B cell (primary cell): ENCODE measurements at regions of chr2 and their contacts with region 1.

Region 1: GRCh38 chr2:144382849-144383248 is 137.1 kb downstream of the ZEB2 start:
- DNase-seq: peak; percentile 69
- ATAC-seq: peak; percentile 96
- H3K4me3 ChIP-seq: peak overlapping the region in 1 of 5 experiments; percentile 50
- H3K4me3 Mint-ChIP-seq: peak overlapping the region; percentile 79
- H3K27ac ChIP-seq: peak overlapping the region in 1 of 2 donors; percentile 21
- H3K27ac Mint-ChIP-seq: peak overlapping the region; percentile 88
- H3K4me1 ChIP-seq: peaks cover 28 to 29% of the 10 kb centered on the region in 2 donors
- H3K4me1 Mint-ChIP-seq: peaks cover 50% of the 10 kb centered on the region
- H3K27me3 ChIP-seq: peaks cover 0 to 7% (median 0%) of the 10 kb centered on the region in 4 experiments
- H3K27me3 Mint-ChIP-seq: no peaks in the 10 kb centered on the region
- CTCF ChIP-seq: no peak

Region 2: DNA sequence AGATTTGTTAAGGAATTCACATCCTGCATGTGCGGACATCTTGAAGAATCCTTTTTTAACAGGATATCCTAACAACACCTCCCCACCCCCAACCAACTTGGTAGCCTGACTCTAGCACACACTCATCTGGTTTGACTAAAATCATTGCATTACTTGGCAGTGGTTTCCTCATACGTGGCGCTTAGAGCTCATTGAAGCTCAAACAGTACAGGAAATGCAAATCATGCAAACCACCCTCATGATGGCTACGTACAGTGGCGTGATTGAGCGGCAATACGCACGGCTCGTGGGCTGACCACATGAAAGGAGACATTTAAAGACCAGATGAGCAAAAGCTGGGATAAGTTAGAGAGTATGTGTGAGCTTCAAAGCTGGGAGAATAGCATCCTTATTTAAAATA is 199.1 kb before region 1 on chr2:
- CTCF ChIA-PET with region 1: no interaction called
- POLR2A ChIA-PET with region 1: no interaction called
- intact Hi-C with region 1: loop called (anchors 10 kb)
- DNase-seq: peak; percentile 84
- ATAC-seq: peak; percentile 98
- H3K4me3 ChIP-seq: peak overlapping the region in 4 of 5 experiments; percentile 6 to 32 (median 22)
- H3K4me3 Mint-ChIP-seq: peak overlapping the region; percentile 86
- H3K27ac ChIP-seq: no peak overlapping the region
- H3K27ac Mint-ChIP-seq: no peak overlapping the region
- H3K4me1 ChIP-seq: peaks cover 8 to 22% of the 10 kb centered on the region in 2 donors
- H3K4me1 Mint-ChIP-seq: peaks cover 27% of the 10 kb centered on the region
- H3K27me3 ChIP-seq: no peaks in the 10 kb centered on the region
- H3K27me3 Mint-ChIP-seq: no peaks in the 10 kb centered on the region
- CTCF ChIP-seq: no peak

Region 3: DNA sequence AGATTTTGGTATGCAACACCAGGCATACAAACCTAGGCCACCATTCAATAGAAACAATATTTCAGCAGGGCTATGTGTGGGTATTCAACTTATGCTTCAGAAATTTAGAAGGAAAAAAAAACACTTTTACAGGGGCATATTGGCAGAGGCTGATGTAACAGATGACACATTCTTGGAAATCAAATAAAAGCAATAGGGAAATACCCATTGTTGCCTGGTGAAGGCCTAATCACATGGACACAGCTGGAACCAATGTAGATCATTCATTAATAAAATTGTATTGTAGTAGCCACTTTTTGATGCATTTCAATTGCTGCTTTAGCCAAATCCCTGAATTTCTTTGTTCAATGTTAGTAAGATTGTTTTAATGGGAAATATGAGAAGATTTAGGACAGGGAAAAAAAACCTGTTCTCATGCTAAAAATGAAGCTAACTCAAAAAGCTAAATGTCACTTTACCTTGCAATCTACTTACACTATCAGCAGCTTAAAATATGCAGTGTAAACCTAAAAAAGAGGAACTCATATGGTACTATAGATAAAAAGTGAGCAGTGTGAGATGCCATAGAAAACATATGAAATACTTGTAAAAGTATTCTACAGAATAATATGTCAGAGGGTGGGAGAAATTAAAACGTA is 152.3 kb before region 1 on chr2:
- CTCF ChIA-PET with region 1: no interaction called
- POLR2A ChIA-PET with region 1: no interaction called
- intact Hi-C with region 1: loop called (anchors 10 kb)
- DNase-seq: no peak
- ATAC-seq: no peak
- H3K4me3 ChIP-seq: no peak overlapping the region
- H3K4me3 Mint-ChIP-seq: no peak overlapping the region
- H3K27ac ChIP-seq: no peak overlapping the region
- H3K27ac Mint-ChIP-seq: no peak overlapping the region
- H3K4me1 ChIP-seq: peaks cover 5 to 14% of the 10 kb centered on the region in 2 donors
- H3K4me1 Mint-ChIP-seq: peaks cover 44% of the 10 kb centered on the region
- H3K27me3 ChIP-seq: no peaks in the 10 kb centered on the region
- H3K27me3 Mint-ChIP-seq: no peaks in the 10 kb centered on the region
- CTCF ChIP-seq: no peak

Region 4: GRCh38 chr2:145752091-145752806 is 1369.4 kb after region 1 on chr2:
- CTCF ChIA-PET with region 1: no interaction called
- POLR2A ChIA-PET with region 1: no interaction called
- intact Hi-C with region 1: loop called (anchors 2 kb)
- DNase-seq: peak; percentile 70
- ATAC-seq: peak; percentile 52
- H3K4me3 ChIP-seq: no peak overlapping the region
- H3K4me3 Mint-ChIP-seq: peak overlapping the region; percentile 62
- H3K27ac ChIP-seq: no peak overlapping the region
- H3K27ac Mint-ChIP-seq: peak overlapping the region; percentile 84
- H3K4me1 ChIP-seq: peaks cover 39 to 45% of the 10 kb centered on the region in 2 donors
- H3K4me1 Mint-ChIP-seq: peaks cover 50% of the 10 kb centered on the region
- H3K27me3 ChIP-seq: no peaks in the 10 kb centered on the region
- H3K27me3 Mint-ChIP-seq: no peaks in the 10 kb centered on the region
- CTCF ChIP-seq: peak; percentile 80